GM12878 (cell line): ENCODE measurements at regions of chr16 and their contacts with region 1.

Region 1: DNA sequence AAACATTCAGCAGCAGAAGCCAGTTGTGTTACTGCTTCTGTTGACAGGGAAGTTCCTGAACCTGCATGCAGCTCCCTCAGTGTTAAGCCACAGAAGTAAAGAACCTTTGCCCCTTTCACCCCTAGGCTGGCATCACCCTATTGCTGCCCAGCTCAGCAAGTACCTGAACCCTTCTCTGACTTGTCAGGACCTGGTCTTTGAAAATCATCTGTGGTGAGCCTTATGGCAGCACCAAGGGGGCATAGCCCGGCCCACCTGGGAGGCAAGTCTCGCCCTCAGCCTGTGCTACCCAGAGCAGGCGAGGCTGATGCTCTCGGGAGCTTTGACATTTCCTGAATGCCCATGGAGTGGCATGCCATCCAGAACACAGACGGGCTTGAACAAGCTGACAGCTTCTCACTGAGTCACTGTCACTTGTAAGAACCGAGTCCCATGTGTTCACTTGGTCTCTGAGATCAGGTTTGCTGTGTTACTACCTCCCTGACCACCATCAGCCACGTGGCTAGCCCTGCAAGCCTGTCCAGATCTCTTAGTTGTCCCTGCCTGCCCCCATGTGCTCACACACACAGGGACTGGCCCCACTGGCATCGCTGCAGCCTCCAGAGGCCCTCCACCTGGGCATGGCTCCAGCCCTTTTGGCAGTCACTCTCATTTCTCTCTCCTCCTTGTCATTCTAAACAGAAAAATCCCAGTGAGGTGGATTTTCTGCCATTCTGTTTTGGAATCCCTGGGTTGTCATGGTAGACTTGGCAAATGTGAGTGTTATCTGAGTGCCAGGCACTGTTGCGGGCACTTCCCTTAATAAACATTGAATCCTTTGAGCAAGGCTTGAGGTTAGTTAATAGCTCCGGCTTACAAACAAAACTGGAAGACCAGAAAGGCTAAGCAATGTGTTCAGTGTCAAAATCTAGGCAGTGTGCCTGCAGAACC is 2.9 kb upstream of the CARMIL2 start:
- DNase-seq: no peak
- ATAC-seq: no peak
- H3K4me3 ChIP-seq: no peak overlapping the region
- H3K27ac ChIP-seq: no peak overlapping the region
- H3K4me1 ChIP-seq: peaks cover 11% of the 10 kb centered on the region; the same call in 1 of the 2 replicates
- H3K27me3 ChIP-seq: no peaks in the 10 kb centered on the region
- CTCF ChIP-seq: no peak
- EP300 ChIP-seq: no peak
- POLR2A ChIP-seq: no peak
- RAD21 ChIP-seq: no peak

Region 2: GRCh38 chr16:67480833-67481560 is 161.0 kb before region 1 on chr16 and contains the start of gene ATP6V0D1:
- CTCF ChIA-PET with region 1: interaction called, 29 read pairs
- POLR2A ChIA-PET with region 1: no interaction called
- RAD21 ChIA-PET with region 1: interaction called, 7 read pairs
- SMC1A ChIA-PET with region 1: interaction called, 5 read pairs
- in situ Hi-C with region 1: no loop called
- intact Hi-C with region 1: no loop called
- DNase-seq: peak; percentile 94
- ATAC-seq: peak; percentile 92
- H3K4me3 ChIP-seq: peak within 1 kb of the TSS; percentile 87
- H3K27ac ChIP-seq: peak within 1 kb of the TSS; percentile 86
- H3K4me1 ChIP-seq: peaks cover 19% of the 10 kb centered on the region
- H3K27me3 ChIP-seq: no peaks in the 10 kb centered on the region
- CTCF ChIP-seq: peak; percentile 82 to 97 (median 93); a peak in 5 of 6 replicates
- EP300 ChIP-seq: 0 out of 4 replicates have a peak, but pooled peaks of 1 of the 2 experiments have one; percentile 13
- POLR2A ChIP-seq: peak; percentile 86
- RAD21 ChIP-seq: peak; percentile 81
- polyA plus RNA-seq, gene ATP6V0D1: 28.1 to 30.2 TPM

Region 3: DNA sequence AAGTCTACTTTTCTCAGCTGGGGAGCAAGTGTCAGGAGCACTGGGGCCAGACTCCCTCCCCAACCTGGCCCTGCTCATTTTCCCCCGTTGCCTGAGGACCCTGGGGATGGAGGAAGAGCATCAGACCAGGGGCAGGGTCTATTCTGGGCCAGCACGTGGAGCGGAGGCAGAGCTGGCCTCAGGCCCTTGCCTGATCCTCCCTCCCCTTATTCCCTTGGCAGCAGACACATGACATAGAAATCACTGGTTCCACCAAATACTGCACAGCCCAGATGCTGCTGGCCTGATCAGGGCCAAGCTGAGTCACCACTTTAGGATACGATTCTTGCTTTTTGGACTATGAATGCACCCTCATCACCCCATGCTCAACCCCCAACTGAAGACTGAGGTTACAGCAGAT is 142.9 kb before region 1 on chr16:
- CTCF ChIA-PET with region 1: interaction called, 18 read pairs
- POLR2A ChIA-PET with region 1: no interaction called
- RAD21 ChIA-PET with region 1: interaction called, 10 read pairs
- SMC1A ChIA-PET with region 1: interaction called, 4 read pairs
- in situ Hi-C with region 1: no loop called
- intact Hi-C with region 1: no loop called
- DNase-seq: no peak
- ATAC-seq: no peak
- H3K4me3 ChIP-seq: no peak overlapping the region
- H3K27ac ChIP-seq: no peak overlapping the region
- H3K4me1 ChIP-seq: no peaks in the 10 kb centered on the region
- H3K27me3 ChIP-seq: no peaks in the 10 kb centered on the region
- CTCF ChIP-seq: no peak
- EP300 ChIP-seq: no peak
- POLR2A ChIP-seq: no peak
- RAD21 ChIP-seq: no peak

Region 4: GRCh38 chr16:67530013-67530939 is 111.8 kb before region 1 on chr16:
- CTCF ChIA-PET with region 1: interaction called, 11 read pairs
- POLR2A ChIA-PET with region 1: no interaction called
- RAD21 ChIA-PET with region 1: interaction called, 5 read pairs
- SMC1A ChIA-PET with region 1: interaction called, 12 read pairs
- in situ Hi-C with region 1: no loop called
- intact Hi-C with region 1: no loop called
- DNase-seq: no peak
- ATAC-seq: peak; percentile 66
- H3K4me3 ChIP-seq: peak overlapping the region; percentile 90; the same call in 1 of the 2 replicates
- H3K27ac ChIP-seq: peak overlapping the region; percentile 22; the same call in 1 of the 2 replicates
- H3K4me1 ChIP-seq: peaks cover 34% of the 10 kb centered on the region
- H3K27me3 ChIP-seq: no peaks in the 10 kb centered on the region
- CTCF ChIP-seq: no peak
- EP300 ChIP-seq: 0 out of 4 replicates have a peak, but pooled peaks of 1 of the 2 experiments have one; percentile 5
- POLR2A ChIP-seq: peak; percentile 57
- RAD21 ChIP-seq: no peak

Region 5: DNA sequence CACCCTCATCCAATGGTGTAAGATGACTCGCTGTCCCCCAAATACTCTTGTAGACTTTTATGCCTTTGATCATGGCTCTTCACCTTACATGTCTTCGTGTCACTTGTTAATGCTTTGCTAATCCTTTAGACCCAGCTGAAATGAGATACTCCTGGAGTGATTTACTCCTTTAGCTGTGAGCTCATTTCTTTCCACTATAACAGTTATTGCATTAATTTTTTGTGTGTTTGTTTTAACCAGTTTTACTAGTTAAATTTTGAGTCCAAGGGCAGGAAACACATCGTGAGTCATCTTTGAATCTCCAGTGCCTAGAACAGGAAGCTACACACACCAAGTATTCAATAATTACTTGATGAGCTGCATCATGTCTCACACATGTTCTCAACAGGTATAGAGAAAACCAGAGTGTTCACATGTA is 86.2 kb before region 1 on chr16:
- CTCF ChIA-PET with region 1: interaction called, 38 read pairs
- POLR2A ChIA-PET with region 1: interaction called, 6 read pairs
- RAD21 ChIA-PET with region 1: interaction called, 48 read pairs
- SMC1A ChIA-PET with region 1: interaction called, 3 read pairs
- in situ Hi-C with region 1: no loop called
- intact Hi-C with region 1: no loop called
- DNase-seq: no peak
- ATAC-seq: peak; percentile 73
- H3K4me3 ChIP-seq: no peak overlapping the region
- H3K27ac ChIP-seq: peak overlapping the region; percentile 54
- H3K4me1 ChIP-seq: peaks cover 31% of the 10 kb centered on the region
- H3K27me3 ChIP-seq: no peaks in the 10 kb centered on the region
- CTCF ChIP-seq: no peak
- EP300 ChIP-seq: no peak
- POLR2A ChIP-seq: no peak
- RAD21 ChIP-seq: no peak

Region 6: GRCh38 chr16:67579686-67580085 is 62.4 kb before region 1 on chr16:
- CTCF ChIA-PET with region 1: interaction called, 3 read pairs
- POLR2A ChIA-PET with region 1: no interaction called
- RAD21 ChIA-PET with region 1: interaction called, 4 read pairs
- SMC1A ChIA-PET with region 1: no interaction called
- in situ Hi-C with region 1: no loop called
- intact Hi-C with region 1: loop called (anchors 2 kb)
- DNase-seq: no peak
- ATAC-seq: no peak
- H3K4me3 ChIP-seq: no peak overlapping the region
- H3K27ac ChIP-seq: no peak overlapping the region
- H3K4me1 ChIP-seq: no peaks in the 10 kb centered on the region
- H3K27me3 ChIP-seq: no peaks in the 10 kb centered on the region
- CTCF ChIP-seq: no peak
- EP300 ChIP-seq: no peak
- POLR2A ChIP-seq: no peak
- RAD21 ChIP-seq: no peak

Region 7: GRCh38 chr16:67667817-67668494 is 25.9 kb after region 1 on chr16:
- CTCF ChIA-PET with region 1: interaction called, 19 read pairs
- POLR2A ChIA-PET with region 1: interaction called, 4 read pairs
- RAD21 ChIA-PET with region 1: interaction called, 16 read pairs
- SMC1A ChIA-PET with region 1: interaction called, 3 read pairs
- in situ Hi-C with region 1: no loop called
- intact Hi-C with region 1: no loop called
- DNase-seq: peak; percentile 70
- ATAC-seq: peak; percentile 88
- H3K4me3 ChIP-seq: no peak overlapping the region
- H3K27ac ChIP-seq: no peak overlapping the region
- H3K4me1 ChIP-seq: peaks cover 34% of the 10 kb centered on the region
- H3K27me3 ChIP-seq: no peaks in the 10 kb centered on the region
- CTCF ChIP-seq: peak; percentile 91 to 94 (median 92)
- EP300 ChIP-seq: no peak
- POLR2A ChIP-seq: no peak
- RAD21 ChIP-seq: peak; percentile 67